ENCODE measurements at regions of chr20 and their contacts with region 1.

Region 1: DNA sequence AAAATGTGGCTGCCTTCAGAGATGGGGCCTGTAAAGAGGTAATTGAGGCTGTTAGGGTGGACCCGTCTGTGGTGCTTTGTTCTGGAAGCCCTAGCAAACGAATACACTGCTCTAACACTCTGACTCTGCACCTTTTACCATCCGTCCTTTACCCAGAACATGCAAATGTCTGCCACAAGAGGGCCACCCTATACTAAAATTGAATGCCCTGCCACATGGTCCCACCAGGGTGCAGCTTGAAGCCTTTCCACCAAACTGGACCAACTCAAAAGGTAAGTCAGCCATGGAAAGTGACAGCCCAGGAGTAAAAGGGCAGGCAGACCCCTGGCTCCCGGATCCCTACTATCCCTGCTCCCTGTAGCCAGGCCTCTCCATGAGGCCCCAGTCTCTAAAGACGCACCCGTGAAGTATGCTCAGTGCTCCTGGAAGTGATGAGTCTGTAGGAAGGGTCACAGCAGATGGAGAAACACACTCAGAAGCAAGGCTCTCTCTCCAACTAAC is 5.8 kb upstream of the BFSP1 start:
- DNase-seq: no peak
- H3K4me3 ChIP-seq: no peak overlapping the region
- H3K27ac ChIP-seq: no peak overlapping the region
- H3K4me1 ChIP-seq: peaks cover 0 to 6% (median under 1%) of the 10 kb centered on the region in 6 donors
- H3K27me3 ChIP-seq: peaks cover 0 to 25% (median 0%) of the 10 kb centered on the region in 7 donors
- CTCF ChIP-seq: peak; percentile 75 to 97 (median 87)
- POLR2A ChIP-seq: no peak

Region 2: GRCh38 chr20:17617551-17618223 is 80.7 kb after region 1 on chr20:
- intact Hi-C with region 1: loop called (anchors 5 kb)
- DNase-seq: peak; percentile 81
- H3K4me3 ChIP-seq: no peak overlapping the region
- H3K27ac ChIP-seq: no peak overlapping the region
- H3K4me1 ChIP-seq: peaks cover 0 to 41% (median 15%) of the 10 kb centered on the region in 6 donors
- H3K27me3 ChIP-seq: no peaks in the 10 kb centered on the region
- CTCF ChIP-seq: peak in 9 of 11 experiments; percentile 39 to 67 (median 54)
- POLR2A ChIP-seq: no peak

Region 3: GRCh38 chr20:17904027-17904426 is 367.0 kb after region 1 on chr20:
- intact Hi-C with region 1: loop called (anchors 10 kb)
- DNase-seq: no peak
- H3K4me3 ChIP-seq: no peak overlapping the region
- H3K27ac ChIP-seq: no peak overlapping the region
- H3K4me1 ChIP-seq: peaks cover 0 to 44% (median 0%) of the 10 kb centered on the region in 6 donors
- H3K27me3 ChIP-seq: no peaks in the 10 kb centered on the region
- CTCF ChIP-seq: no peak
- POLR2A ChIP-seq: no peak

Measured in spleen (tissue), 13 donors.